Activated CD8-positive, alpha-beta memory T cell treated with anti-CD3 and anti-CD28 coated beads, Interleukin-2, amount 10 ng/mL, durations not matched to agents 7 days and 5 days (primary cell): ENCODE measurements at regions of chr10 and their contacts with region 1.

Region 1: GRCh38 chr10:114068054-114068707 is 24.5 kb downstream of the ADRB1 start:
- DNase-seq: no peak
- ATAC-seq: peak; percentile 53
- H3K4me3 Mint-ChIP-seq: no peak overlapping the region
- H3K27ac Mint-ChIP-seq: peak overlapping the region; percentile 59
- H3K4me1 Mint-ChIP-seq: peaks cover 27% of the 10 kb centered on the region
- H3K27me3 Mint-ChIP-seq: peaks cover 18% of the 10 kb centered on the region

Region 2: DNA sequence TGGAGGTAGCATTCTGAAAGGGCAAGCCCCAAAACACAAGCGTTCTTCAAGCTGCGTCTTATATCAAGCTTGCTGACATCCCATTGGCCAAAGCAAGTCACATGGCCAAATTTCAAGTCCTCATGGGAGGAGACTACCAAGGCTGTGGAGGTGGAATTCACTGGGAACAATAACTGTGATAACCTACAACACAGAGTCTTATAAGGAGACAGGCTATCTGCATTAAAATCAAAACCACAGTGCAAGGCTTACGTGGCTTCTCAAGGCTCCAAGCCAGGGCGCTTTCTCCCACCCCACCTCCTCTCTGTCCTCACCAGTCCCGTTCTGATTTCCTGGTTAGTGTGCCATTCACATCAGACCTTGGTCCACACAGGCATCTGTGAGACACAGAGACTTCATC is 14.9 kb after region 1 on chr10:
- CTCF ChIA-PET with region 1: interaction called, 13 read pairs
- DNase-seq: peak; percentile 49
- ATAC-seq: peak; percentile 40
- H3K4me3 Mint-ChIP-seq: no peak overlapping the region
- H3K27ac Mint-ChIP-seq: no peak overlapping the region
- H3K4me1 Mint-ChIP-seq: peaks cover 2% of the 10 kb centered on the region
- H3K27me3 Mint-ChIP-seq: peaks cover 22% of the 10 kb centered on the region

Region 3: DNA sequence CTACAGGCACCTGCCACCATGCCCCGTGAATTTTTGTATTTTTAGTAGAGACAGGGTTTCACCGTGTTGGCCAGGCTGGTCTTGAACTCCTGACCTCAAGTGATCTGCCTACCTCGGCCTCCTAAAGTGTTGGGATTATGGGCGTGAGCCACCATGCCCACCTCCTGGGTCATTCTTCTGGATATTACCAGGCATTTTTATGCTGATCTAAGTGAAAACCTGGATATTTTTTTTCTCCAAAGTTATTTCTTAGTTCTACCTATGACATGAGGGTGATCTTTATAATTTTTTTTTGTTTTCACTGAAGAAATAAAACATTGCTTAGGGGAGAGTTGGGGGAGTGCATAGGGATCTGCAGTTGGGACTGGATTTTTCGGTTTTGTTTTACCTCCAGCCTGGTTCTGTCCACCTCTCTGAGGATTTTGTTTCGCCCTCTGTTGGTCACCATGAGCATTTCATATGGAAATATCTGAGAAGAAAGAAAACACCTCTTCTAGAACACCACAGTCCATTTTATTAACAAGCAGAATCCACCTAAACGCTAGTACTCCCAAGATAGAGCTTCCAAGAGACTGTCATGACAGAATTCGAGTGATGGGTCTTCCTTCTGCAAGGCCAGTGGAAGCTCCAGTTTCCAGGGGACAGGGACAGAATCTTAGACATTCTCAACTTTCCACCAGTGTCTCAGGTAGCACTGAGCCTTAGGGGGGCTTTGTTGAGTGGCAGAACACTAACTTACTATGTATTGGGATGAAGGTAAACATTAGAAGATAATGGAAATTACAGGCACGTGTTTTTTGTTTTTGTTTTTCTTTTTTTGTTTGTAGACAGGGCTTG is 369.5 kb after region 1 on chr10:
- CTCF ChIA-PET with region 1: no interaction called
- DNase-seq: no peak
- ATAC-seq: no peak
- H3K4me3 Mint-ChIP-seq: no peak overlapping the region
- H3K27ac Mint-ChIP-seq: no peak overlapping the region
- H3K4me1 Mint-ChIP-seq: peaks cover 4% of the 10 kb centered on the region
- H3K27me3 Mint-ChIP-seq: no peaks in the 10 kb centered on the region